ENCODE measurements at regions of chr2 and their contacts with region 1.

Region 1: DNA sequence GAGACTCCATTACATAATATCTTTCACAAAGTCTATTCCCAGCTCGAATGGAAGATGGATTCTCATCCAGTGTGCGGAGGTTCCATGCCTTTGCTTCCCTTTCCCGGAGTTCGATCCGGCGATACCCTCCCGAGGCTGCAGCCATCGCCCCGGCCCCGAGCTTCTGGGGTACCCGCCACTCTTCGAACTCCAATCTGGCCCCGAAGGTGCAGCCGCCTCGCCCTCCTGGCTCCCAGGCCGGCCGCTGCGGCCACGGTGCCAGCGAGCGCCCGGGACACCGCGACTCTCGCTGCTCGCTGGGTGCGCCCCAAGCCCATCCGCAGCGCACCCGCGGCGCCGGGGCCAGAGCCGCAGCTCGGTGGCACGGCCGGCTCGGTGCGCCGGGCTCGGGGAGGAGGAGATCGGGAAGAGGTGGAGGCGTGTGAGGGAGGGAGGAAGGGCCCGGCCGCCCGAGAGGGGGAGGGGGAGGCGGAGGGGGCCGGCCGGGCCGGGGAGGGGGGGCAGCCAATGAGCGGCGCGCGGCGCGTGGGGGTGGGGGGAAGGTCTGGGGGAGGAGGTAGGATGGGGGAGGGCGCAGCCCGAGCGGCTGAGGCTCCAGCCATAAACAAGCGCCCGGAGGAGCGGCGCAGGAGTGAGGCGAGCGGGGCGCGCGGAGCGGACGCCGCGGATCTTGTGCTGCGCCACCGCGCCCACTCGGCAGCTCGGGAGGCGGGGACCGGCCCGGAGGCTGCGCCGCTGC is at the start of gene CRIM1:
- DNase-seq: peak; percentile 82
- H3K4me3 ChIP-seq: peak within 1 kb of the TSS; percentile 81
- H3K27ac ChIP-seq: peak within 1 kb of the TSS; percentile 70
- H3K4me1 ChIP-seq: peaks cover 53% of the 10 kb centered on the region
- CTCF ChIP-seq: no peak
- total RNA-seq, gene CRIM1: 24.5 and 37.0 TPM in 2 replicates

Region 2: DNA sequence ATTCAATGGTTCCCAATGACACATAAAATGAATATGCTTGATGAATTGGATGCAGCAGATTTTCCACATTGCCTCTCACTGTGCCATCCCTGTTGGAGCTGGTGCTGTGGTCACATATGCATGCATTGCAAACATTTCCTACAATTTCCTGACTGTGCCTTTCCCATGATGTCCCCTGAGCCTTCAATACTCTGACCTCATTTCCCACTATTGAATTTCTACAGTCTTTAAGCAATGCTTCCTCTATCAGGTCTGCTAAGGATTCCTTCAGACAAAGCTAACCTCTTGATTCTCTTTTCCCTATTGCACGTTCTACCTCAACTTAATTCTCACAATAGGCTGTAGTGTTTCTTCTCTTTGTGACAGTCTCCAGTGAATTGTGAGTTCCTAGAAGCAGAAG is 342.3 kb before region 1 on chr2:
- CTCF ChIA-PET with region 1: no interaction called
- POLR2A ChIA-PET with region 1: no interaction called
- intact Hi-C with region 1: no loop called
- DNase-seq: no peak
- H3K4me3 ChIP-seq: no peak overlapping the region
- H3K27ac ChIP-seq: no peak overlapping the region
- H3K4me1 ChIP-seq: no peaks in the 10 kb centered on the region
- CTCF ChIP-seq: no peak

Region 3: GRCh38 chr2:36461039-36461681 is 105.8 kb after region 1 on chr2:
- CTCF ChIA-PET with region 1: interaction called, 3 read pairs
- POLR2A ChIA-PET with region 1: no interaction called
- intact Hi-C with region 1: loop called (anchors 5 kb)
- DNase-seq: peak; percentile 47
- H3K4me3 ChIP-seq: no peak overlapping the region
- H3K27ac ChIP-seq: no peak overlapping the region
- H3K4me1 ChIP-seq: peaks cover 23% of the 10 kb centered on the region
- CTCF ChIP-seq: no peak

Region 4: DNA sequence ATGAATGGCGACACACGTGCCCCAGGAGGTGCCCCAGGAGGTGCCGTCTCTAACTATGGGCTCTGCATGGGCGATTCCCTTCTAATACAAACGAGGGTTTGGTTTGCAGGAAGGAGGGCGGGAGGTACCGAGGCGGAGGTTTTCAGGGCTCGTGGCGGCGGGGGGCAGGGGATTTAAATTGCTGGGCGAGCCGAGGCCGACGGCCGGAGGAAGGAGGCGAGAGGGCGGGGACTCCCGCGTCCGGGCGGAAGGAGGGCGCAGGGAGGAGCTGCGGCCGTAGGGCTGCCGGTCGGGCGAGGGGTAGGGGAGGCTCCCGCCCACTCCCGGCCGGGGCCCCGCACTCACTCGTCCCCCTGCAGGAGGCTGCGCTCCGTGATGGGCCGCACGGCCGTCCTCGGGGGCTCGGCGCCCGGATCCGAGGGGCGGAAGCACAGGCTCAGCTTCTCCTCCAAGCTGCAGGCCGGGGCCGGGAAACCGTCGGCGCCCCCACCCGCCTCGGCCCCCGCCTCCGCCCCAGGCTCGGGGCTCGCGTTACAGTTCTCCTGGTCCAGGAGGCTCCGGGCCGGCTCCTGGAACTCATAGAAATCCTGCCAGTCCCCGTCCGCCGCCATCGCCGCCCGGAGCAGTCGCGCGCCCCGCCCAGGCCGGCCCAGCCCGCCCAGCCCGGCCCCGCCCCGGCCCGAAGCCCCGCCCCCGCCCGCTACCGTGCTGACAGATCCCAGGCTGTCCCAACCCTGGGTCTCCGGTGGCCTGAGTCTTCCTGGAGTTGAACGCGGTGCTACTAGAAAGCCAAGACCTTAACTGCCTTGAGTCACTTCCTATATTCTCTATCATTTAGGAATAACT is 242.4 kb after region 1 on chr2 and contains the start of gene FEZ2:
- CTCF ChIA-PET with region 1: no interaction called
- POLR2A ChIA-PET with region 1: no interaction called
- intact Hi-C with region 1: loop called (anchors 2 kb)
- DNase-seq: peak; percentile 90
- H3K4me3 ChIP-seq: peak within 1 kb of the TSS; percentile 86
- H3K27ac ChIP-seq: peak within 1 kb of the TSS; percentile 40
- H3K4me1 ChIP-seq: peaks cover 11% of the 10 kb centered on the region
- CTCF ChIP-seq: no peak
- total RNA-seq, gene FEZ2: 17.1 and 19.3 TPM in 2 replicates

Region 5: DNA sequence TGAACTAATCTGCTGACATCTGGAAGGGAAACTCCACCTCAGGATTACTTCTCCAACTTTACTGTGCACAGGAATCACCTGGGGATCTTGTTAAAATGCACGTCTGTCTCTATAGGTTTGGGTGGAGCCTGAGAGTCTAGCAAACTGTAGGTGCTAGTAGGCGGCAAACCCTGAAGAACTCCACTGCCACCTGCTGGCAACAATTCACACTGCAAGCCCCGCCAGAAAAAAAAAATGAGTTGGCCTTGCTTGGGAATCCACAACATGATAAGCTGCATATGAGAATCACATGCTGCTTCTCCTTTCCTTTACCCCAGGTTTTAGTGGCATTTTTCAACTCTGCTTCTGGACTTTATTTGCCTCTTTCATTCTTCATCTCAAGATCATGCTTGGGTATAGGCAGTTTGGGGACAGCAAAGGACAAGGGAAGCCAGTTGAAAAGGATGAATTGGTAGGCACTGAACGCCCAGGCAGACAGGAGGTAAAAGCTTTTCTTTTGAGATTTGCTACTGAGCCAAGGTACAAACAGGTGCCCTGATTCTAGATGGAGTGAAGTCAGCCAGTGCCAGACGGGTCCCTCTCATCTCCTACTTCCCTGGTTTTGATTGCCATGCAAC is 430.0 kb after region 1 on chr2:
- CTCF ChIA-PET with region 1: no interaction called
- POLR2A ChIA-PET with region 1: interaction called, 3 read pairs
- intact Hi-C with region 1: loop called (anchors 2 kb)
- DNase-seq: peak; percentile 62
- H3K4me3 ChIP-seq: no peak overlapping the region
- H3K27ac ChIP-seq: no peak overlapping the region
- H3K4me1 ChIP-seq: peaks cover 9% of the 10 kb centered on the region
- CTCF ChIP-seq: peak; percentile 98

Measured in OCI-LY7 (cell line).